ENCODE measurements at regions of chr17 and their contacts with region 1.

Region 1: GRCh38 chr17:76523084-76524037 is 14.1 kb downstream of the CYGB start:
- DNase-seq: peak; percentile 83 to 91
- H3K4me3 ChIP-seq: no peak overlapping the region
- H3K27ac ChIP-seq: no peak overlapping the region
- H3K4me1 ChIP-seq: peaks cover 13 to 43% (median 29%) of the 10 kb centered on the region in 4 donors
- H3K27me3 ChIP-seq: peaks cover 0 to 24% (median 0%) of the 10 kb centered on the region in 3 donors
- CTCF ChIP-seq: peak in 6 of 7 experiments; percentile 84 to 100 (median 98)
- EP300 ChIP-seq: no peak
- POLR2A ChIP-seq: no peak

Region 2: GRCh38 chr17:76623271-76624146 is 100.1 kb after region 1 on chr17:
- intact Hi-C with region 1: loop called (anchors 5 kb)
- DNase-seq: peak; percentile 80 to 91
- H3K4me3 ChIP-seq: no peak overlapping the region
- H3K27ac ChIP-seq: no peak overlapping the region
- H3K4me1 ChIP-seq: peaks cover 0 to 8% (median 4%) of the 10 kb centered on the region in 4 donors
- H3K27me3 ChIP-seq: no peaks in the 10 kb centered on the region
- CTCF ChIP-seq: peak in 6 of 7 experiments; percentile 18 to 97 (median 88)
- EP300 ChIP-seq: no peak
- POLR2A ChIP-seq: no peak

Region 3: DNA sequence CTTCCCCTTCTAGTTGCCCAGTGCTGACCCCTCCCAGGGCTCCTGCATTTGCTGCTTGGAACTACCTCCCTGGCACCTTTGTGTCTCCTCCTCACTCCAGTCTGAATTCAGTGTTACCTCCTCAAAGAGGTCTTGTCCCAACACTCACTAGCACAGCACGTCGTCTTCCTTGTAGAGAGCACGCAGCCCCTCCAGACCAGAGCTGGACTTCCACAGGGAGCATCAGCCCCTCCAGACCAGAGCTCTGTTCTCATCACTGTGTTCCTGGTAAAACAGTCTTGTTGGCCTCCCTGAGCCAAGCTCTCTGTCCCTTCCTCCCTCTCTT is 317.0 kb after region 1 on chr17:
- intact Hi-C with region 1: no loop called
- DNase-seq: no peak
- H3K4me3 ChIP-seq: no peak overlapping the region
- H3K27ac ChIP-seq: no peak overlapping the region
- H3K4me1 ChIP-seq: peaks cover 10 to 22% (median 15%) of the 10 kb centered on the region in 4 donors
- H3K27me3 ChIP-seq: peaks cover 4 to 64% (median 35%) of the 10 kb centered on the region in 3 donors
- CTCF ChIP-seq: no peak
- EP300 ChIP-seq: no peak
- POLR2A ChIP-seq: no peak

Measured in stomach (tissue), 19 donors.